Endothelial cell of umbilical vein (primary cell): ENCODE measurements at regions of chr18 and their contacts with region 1.

Region 1: GRCh38 chr18:32998285-32998684 is 225.5 kb upstream of the KLHL14 start:
- DNase-seq: no peak
- H3K4me3 ChIP-seq: no peak overlapping the region
- H3K27ac ChIP-seq: no peak overlapping the region
- H3K4me1 ChIP-seq: no peaks in the 10 kb centered on the region
- H3K27me3 ChIP-seq: no peaks in the 10 kb centered on the region
- CTCF ChIP-seq: no peak
- POLR2A ChIP-seq: no peak

Region 2: DNA sequence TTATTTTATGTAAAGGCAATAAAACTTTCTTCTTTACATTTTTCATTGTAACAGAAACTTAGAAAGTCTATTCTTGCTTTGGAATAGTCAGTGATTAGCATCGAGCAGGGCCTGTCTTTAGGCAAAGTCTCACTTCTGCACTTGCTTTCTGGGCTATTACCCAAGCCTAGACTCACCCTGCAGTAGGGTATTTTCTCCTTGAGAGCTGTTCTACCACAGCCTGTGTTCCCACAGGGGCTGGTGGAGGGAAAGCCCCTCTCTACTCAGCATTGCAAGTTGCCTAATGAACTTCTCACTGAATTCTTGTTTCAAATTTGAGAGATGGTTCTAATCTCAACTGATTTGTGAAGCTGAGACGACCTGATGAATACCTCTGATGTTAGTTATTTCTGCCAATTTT is 113.7 kb before region 1 on chr18:
- CTCF ChIA-PET with region 1: no interaction called
- POLR2A ChIA-PET with region 1: no interaction called
- dilution Hi-C with region 1: no loop called
- intact Hi-C with region 1: no loop called
- DNase-seq: no peak
- H3K4me3 ChIP-seq: no peak overlapping the region
- H3K27ac ChIP-seq: no peak overlapping the region
- H3K4me1 ChIP-seq: no peaks in the 10 kb centered on the region
- H3K27me3 ChIP-seq: no peaks in the 10 kb centered on the region
- CTCF ChIP-seq: no peak
- POLR2A ChIP-seq: no peak

Region 3: DNA sequence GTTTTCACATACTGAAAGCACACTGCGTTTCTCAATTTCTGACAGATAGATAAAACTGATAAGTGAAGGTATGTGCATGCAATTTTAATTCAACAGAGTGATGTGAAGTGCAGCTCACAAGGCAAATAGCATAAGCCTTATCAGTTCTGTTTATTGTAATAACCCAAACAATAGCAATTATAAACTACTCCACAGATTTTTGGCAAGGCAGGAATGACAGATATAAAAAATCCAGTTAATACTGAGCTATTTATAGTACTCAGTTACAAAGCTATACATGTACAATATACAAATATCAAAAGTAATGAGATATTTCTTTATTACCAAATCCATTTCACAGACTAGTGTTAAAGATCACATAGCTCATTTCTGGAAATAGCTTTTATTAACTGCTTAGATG is 14.6 kb before region 1 on chr18:
- CTCF ChIA-PET with region 1: interaction called, 11 read pairs
- POLR2A ChIA-PET with region 1: no interaction called
- dilution Hi-C with region 1: no loop called
- intact Hi-C with region 1: no loop called
- DNase-seq: no peak
- H3K4me3 ChIP-seq: no peak overlapping the region
- H3K27ac ChIP-seq: no peak overlapping the region
- H3K4me1 ChIP-seq: no peaks in the 10 kb centered on the region
- H3K27me3 ChIP-seq: no peaks in the 10 kb centered on the region
- CTCF ChIP-seq: no peak
- POLR2A ChIP-seq: no peak